WTC11 (cell line): ENCODE measurements at regions of chr19 and their contacts with region 1.

Region 1: DNA sequence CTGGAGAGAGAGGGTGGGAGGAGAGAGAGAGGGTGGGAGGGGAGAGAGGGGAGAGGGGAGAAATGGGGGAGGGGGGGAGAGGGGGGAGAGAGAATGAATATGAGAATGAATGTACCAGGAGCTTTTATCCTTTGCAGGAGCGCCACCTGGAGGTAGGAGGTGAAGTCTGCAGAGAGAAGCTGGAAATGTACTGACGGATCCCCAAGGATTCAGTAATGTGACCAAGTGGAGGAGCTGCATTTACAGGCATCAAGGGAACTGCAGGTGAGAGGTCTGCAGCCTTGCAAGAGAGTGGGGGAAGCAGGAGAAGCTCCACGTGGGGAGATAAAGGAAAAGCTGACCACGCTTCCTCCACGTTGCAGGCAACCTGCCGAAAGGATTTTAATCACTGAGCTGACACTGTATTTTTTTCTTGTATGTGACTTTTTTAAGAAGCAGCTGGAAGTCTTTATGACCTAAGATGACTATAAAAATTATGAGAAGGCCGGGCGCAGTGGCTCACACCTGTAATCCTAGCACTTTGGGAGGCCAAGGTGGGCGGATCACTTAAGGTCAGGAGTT is 33.7 kb downstream of the VSTM1 start:
- DNase-seq: peak; percentile 86
- ATAC-seq: peak; percentile 90
- H3K4me3 Mint-ChIP-seq: no peak overlapping the region
- H3K27ac Mint-ChIP-seq: peak overlapping the region; percentile 75
- H3K4me1 Mint-ChIP-seq: peaks cover 36% of the 10 kb centered on the region
- H3K27me3 Mint-ChIP-seq: no peaks in the 10 kb centered on the region
- CTCF ChIP-seq: peak; percentile 79

Region 2: GRCh38 chr19:53646144-53646543 is 383.9 kb before region 1 on chr19:
- CTCF ChIA-PET with region 1: no interaction called
- POLR2A ChIA-PET with region 1: no interaction called
- DNase-seq: no peak
- ATAC-seq: no peak; the same call in 1 of the 2 replicates
- H3K4me3 Mint-ChIP-seq: no peak overlapping the region
- H3K27ac Mint-ChIP-seq: peak overlapping the region; percentile 44; the same call in 1 of the 2 replicates
- H3K4me1 Mint-ChIP-seq: peaks cover 35% of the 10 kb centered on the region
- H3K27me3 Mint-ChIP-seq: peaks cover 4% of the 10 kb centered on the region; the same call in 1 of the 2 replicates
- CTCF ChIP-seq: no peak

Region 3: GRCh38 chr19:53792721-53793433 is 237.1 kb before region 1 on chr19:
- CTCF ChIA-PET with region 1: interaction called, 18 read pairs
- POLR2A ChIA-PET with region 1: interaction called, 4 read pairs
- DNase-seq: peak; percentile 93
- ATAC-seq: peak; percentile 97
- H3K4me3 Mint-ChIP-seq: no peak overlapping the region
- H3K27ac Mint-ChIP-seq: peak overlapping the region; percentile 79
- H3K4me1 Mint-ChIP-seq: peaks cover 25% of the 10 kb centered on the region
- H3K27me3 Mint-ChIP-seq: 0 out of 2 replicates have a peak, but pooled peaks cover under 1% of the 10 kb centered on the region
- CTCF ChIP-seq: peak; percentile 97

Region 4: DNA sequence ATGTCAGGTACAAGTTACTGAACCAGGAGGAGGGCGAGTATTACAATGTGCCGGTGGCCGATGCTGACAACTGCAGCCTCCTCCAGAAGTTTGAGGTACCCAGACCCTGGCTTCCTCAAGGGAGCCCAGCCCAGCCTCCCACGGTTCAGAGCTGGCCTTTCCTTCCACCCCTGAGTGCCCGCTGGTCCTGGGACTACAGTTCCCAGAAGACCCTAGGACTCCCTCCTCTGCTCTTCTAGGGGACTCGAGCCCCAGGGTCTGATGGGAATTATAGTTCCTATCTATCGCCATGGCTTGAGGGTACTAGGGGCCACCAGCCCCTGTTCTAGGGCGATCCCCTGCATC is 137.1 kb before region 1 on chr19:
- CTCF ChIA-PET with region 1: interaction called, 11 read pairs
- POLR2A ChIA-PET with region 1: interaction called, 3 read pairs
- DNase-seq: peak; percentile 69
- ATAC-seq: peak; percentile 61
- H3K4me3 Mint-ChIP-seq: no peak overlapping the region
- H3K27ac Mint-ChIP-seq: peak overlapping the region; percentile 91; the same call in 1 of the 2 replicates
- H3K4me1 Mint-ChIP-seq: peaks cover 35% of the 10 kb centered on the region
- H3K27me3 Mint-ChIP-seq: peaks cover 2% of the 10 kb centered on the region; the same call in 1 of the 2 replicates
- CTCF ChIP-seq: no peak

Region 5: DNA sequence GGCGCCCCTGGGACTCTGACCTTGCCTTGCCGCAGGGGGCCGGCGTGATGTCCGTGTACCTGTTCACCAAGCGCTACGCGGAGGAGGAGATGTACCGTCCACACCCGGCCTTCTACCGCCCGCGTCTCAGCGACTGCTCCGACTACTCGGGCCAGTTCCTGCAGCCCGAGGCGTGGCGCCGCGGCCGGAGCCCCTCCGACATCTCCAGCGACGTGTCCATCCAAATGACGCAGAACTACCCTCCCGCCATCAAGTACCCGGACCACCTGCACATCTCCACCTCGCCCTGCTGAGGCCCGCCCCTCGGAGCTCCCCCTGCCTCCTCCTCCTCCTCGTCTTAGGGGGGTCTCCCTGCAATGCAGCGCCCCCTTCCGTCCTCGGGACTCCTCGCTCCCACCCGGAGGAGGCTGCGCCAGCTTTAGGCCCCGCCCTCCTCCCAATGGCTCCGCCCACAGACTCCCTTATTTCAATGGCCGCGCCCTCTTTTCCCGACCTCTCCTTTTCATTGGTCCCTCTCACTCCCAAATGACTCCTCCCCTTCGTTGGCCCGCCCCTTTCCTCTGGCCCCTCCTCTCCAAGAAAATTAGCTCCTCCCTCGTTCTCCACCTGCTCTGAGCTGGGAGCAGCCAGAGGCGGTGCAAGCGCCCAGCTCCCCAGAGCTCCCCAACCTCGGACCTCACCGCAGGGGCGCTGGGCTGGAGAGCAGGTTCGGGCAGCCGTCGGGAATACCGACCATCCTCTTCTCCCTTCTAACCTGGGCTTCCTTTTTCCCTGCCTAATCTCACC is 87.8 kb before region 1 on chr19:
- CTCF ChIA-PET with region 1: interaction called, 37 read pairs
- POLR2A ChIA-PET with region 1: interaction called, 6 read pairs
- DNase-seq: peak; percentile 100
- ATAC-seq: peak; percentile 92
- H3K4me3 Mint-ChIP-seq: peak overlapping the region; percentile 95
- H3K27ac Mint-ChIP-seq: 0 out of 2 replicates have a peak overlapping the region, but pooled peaks have one; percentile 83
- H3K4me1 Mint-ChIP-seq: peaks cover 32% of the 10 kb centered on the region
- H3K27me3 Mint-ChIP-seq: no peaks in the 10 kb centered on the region; the same call in 1 of the 2 replicates
- CTCF ChIP-seq: peak; percentile 88

Region 6: DNA sequence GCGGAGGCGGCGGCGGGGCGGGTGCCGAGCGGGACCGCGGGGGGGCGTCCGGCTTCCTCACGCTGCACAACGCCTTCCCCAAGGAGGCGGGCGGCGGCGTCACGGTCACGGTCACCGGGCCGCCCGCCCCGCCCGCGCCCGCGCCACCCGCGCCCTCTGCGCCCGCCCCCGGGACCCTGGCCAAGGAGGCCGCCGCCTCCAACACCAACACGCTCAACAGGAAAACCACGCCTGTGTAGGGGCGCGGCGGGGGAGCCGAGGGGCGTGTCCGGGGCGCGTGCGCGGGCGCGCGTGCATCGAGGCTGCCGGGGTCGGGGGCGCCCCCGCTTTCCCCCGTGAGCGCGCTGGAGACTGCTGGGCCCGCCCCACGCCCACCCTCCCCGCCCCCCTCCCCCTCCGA is 47.4 kb before region 1 on chr19:
- CTCF ChIA-PET with region 1: interaction called, 48 read pairs
- POLR2A ChIA-PET with region 1: interaction called, 9 read pairs
- DNase-seq: peak; percentile 62
- ATAC-seq: no peak
- H3K4me3 Mint-ChIP-seq: no peak overlapping the region
- H3K27ac Mint-ChIP-seq: no peak overlapping the region
- H3K4me1 Mint-ChIP-seq: peaks cover 11% of the 10 kb centered on the region
- H3K27me3 Mint-ChIP-seq: peaks cover 4% of the 10 kb centered on the region; the same call in 1 of the 2 replicates
- CTCF ChIP-seq: no peak

Region 7: DNA sequence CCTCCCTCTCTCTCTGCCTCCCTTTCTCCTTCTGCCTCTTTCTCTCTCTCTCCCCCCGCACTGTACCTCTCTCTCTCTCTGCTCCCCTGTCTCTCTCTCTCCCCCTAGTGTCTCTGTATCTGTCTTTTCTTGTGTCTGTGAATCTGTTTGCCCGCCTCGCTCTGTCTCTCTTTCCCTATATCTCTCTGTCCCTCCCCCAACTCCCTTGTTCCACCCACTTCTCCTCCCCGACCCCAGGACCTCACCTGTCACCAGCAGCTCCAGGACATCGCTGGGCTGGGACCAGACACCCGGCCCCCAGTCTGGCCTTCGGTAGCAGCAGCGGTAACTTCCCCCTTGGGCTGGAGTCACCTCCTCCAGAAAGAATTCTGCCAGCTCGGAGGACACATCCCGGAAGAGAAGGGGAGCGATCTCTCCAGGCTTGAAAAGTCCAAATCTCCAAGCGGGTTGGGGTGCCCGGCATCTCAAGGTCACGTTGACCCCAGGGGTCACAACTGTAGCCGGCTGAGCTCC is 66.7 kb after region 1 on chr19:
- CTCF ChIA-PET with region 1: interaction called, 68 read pairs
- POLR2A ChIA-PET with region 1: no interaction called
- DNase-seq: peak; percentile 44
- ATAC-seq: peak; percentile 64
- H3K4me3 Mint-ChIP-seq: peak overlapping the region; percentile 77
- H3K27ac Mint-ChIP-seq: no peak overlapping the region
- H3K4me1 Mint-ChIP-seq: peaks cover 5% of the 10 kb centered on the region
- H3K27me3 Mint-ChIP-seq: peaks cover 34% of the 10 kb centered on the region
- CTCF ChIP-seq: no peak